Activated CD4-positive, alpha-beta T cell treated with anti-CD3 and anti-CD28 coated beads, Interleukin-2, amount 10 ng/mL, durations not matched to agents 24 days and 14 days (primary cell): ENCODE measurements at regions of chr2 and their contacts with region 1.

Region 1: DNA sequence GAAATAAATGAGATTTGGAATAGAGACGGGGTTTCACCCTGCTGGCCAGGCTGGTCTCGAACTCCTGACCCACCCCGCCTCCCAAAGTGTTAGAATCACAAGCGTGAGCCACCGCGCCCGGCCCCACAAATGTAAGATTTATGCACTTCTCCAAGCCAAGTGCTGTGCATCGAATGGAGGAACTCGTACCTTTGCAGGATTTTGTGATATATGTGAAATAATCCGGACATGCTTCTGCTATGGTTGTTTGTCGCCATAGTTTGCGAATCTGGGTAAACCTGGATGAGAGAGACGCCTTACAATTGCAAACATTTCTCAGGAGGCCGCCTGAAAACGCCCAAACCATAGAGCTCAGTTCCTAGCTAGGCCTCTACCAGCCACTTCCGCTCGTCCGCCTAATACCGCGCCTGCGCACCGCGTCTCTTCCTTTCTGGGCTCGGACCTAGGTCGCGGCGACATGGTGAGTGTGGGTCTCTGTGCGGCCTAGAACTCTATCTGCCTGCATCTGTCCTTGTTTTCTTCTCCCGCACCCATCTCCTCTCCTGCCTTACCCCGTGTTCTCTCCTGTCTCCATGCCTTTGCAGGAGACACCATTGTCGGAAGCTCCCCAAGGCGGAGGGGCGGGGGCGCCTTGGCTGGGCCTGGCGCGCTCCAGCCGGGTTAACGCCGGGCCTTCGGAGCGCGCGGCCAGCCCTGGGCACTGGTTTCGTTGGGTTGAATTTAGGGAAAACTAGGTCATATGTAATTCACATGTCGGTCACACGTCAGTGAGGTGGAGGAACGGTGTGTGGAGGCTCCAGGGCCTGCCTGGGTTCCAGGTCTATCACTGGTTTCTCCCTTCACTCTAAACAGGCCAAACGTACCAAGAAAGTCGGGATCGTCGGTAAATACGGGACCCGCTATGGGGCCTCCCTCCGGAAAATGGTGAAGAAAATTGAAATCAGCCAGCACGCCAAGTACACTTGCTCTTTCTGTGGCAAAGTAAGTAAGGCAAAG is at the start of gene RPL37A:
- DNase-seq: peak; percentile 97
- H3K4me3 Mint-ChIP-seq: peak within 1 kb of the TSS; percentile 100
- H3K27ac Mint-ChIP-seq: peak within 1 kb of the TSS; percentile 95
- H3K4me1 Mint-ChIP-seq: peaks cover 50% of the 10 kb centered on the region
- H3K27me3 Mint-ChIP-seq: no peaks in the 10 kb centered on the region
- total RNA-seq, gene RPL37A: 3,125 and 3,168 TPM in 2 replicates

Region 2: GRCh38 chr2:216206041-216206703 is 292.5 kb before region 1 on chr2:
- intact Hi-C with region 1: loop called (anchors 5 kb)
- DNase-seq: peak; percentile 50
- H3K4me3 Mint-ChIP-seq: peak overlapping the region; percentile 32
- H3K27ac Mint-ChIP-seq: peak overlapping the region; percentile 89
- H3K4me1 Mint-ChIP-seq: peaks cover 44% of the 10 kb centered on the region
- H3K27me3 Mint-ChIP-seq: no peaks in the 10 kb centered on the region

Region 3: GRCh38 chr2:216412022-216412999 is 86.4 kb before region 1 on chr2 and contains the start of gene SMARCAL1:
- intact Hi-C with region 1: loop called (anchors 1 kb)
- DNase-seq: peak; percentile 99
- H3K4me3 Mint-ChIP-seq: peak within 1 kb of the TSS; percentile 100
- H3K27ac Mint-ChIP-seq: peak within 1 kb of the TSS; percentile 96
- H3K4me1 Mint-ChIP-seq: peaks cover 16% of the 10 kb centered on the region
- H3K27me3 Mint-ChIP-seq: peaks cover 11% of the 10 kb centered on the region
- total RNA-seq, gene SMARCAL1: 27.4 and 29.0 TPM in 2 replicates

Region 4: DNA sequence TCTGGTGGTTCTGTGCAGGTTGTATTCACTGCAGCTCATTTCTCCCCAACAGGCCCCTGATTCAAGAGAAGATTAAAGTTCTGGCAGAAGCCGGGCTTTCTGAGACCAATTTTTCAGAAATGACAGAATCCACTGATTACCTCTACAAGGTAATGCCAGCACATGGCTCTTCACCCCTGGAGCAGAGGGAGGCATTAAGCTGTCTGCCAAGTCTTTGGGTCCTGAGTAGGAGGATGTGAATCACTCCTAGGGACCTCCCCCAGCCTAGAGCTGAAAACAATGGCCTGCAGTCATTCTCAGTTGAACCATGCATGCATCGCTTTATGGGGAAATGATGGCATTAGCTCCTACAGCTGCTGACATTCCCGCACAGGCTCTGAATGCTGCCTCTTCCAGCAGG is 20.6 kb before region 1 on chr2:
- intact Hi-C with region 1: loop called (anchors 1 kb)
- DNase-seq: no peak
- H3K4me3 Mint-ChIP-seq: no peak overlapping the region
- H3K27ac Mint-ChIP-seq: no peak overlapping the region
- H3K4me1 Mint-ChIP-seq: peaks cover 19% of the 10 kb centered on the region
- H3K27me3 Mint-ChIP-seq: no peaks in the 10 kb centered on the region

Region 5: GRCh38 chr2:216519154-216519762 is 20.5 kb after region 1 on chr2:
- intact Hi-C with region 1: no loop called
- DNase-seq: peak; percentile 89
- H3K4me3 Mint-ChIP-seq: no peak overlapping the region
- H3K27ac Mint-ChIP-seq: no peak overlapping the region
- H3K4me1 Mint-ChIP-seq: peaks cover 2% of the 10 kb centered on the region
- H3K27me3 Mint-ChIP-seq: no peaks in the 10 kb centered on the region

Region 6: DNA sequence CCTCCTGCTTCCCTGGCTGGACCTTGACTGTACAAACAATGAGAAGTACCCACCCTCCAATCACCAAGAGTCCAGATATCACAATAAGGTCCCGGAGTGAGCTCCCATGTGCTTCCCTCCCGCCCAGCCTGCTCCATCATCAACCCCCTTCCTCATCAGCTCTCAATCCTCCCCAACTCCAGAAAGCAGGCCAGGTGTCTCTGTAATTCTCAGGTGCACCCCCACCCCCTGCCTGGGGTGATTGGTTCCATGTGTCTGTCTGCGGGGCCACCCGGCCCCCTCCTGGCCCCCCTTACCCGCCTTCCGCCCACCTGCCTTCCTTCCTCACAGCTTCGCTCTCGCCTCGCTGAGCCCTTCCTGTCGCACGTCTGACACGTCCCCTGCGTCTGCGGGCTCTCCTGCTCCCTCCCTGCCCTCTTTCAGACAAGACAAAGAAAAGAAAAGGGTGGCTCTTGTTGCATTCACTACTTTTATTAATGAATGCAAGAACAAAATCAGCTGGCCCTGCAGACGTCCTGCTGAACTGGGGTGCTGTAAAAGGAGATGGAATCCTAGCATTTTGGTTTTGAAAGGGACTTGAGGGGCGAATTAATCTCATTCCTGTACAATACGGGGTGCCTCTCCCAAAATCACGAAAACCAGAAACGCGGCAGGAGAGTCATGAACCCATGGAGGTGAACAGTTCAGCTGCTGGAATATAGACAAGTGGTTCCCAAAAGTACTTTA is 108.0 kb after region 1 on chr2:
- intact Hi-C with region 1: loop called (anchors 2 kb)
- DNase-seq: peak; percentile 88
- H3K4me3 Mint-ChIP-seq: peak overlapping the region; percentile 92
- H3K27ac Mint-ChIP-seq: peak overlapping the region; percentile 98
- H3K4me1 Mint-ChIP-seq: peaks cover 40% of the 10 kb centered on the region
- H3K27me3 Mint-ChIP-seq: no peaks in the 10 kb centered on the region

Region 7: DNA sequence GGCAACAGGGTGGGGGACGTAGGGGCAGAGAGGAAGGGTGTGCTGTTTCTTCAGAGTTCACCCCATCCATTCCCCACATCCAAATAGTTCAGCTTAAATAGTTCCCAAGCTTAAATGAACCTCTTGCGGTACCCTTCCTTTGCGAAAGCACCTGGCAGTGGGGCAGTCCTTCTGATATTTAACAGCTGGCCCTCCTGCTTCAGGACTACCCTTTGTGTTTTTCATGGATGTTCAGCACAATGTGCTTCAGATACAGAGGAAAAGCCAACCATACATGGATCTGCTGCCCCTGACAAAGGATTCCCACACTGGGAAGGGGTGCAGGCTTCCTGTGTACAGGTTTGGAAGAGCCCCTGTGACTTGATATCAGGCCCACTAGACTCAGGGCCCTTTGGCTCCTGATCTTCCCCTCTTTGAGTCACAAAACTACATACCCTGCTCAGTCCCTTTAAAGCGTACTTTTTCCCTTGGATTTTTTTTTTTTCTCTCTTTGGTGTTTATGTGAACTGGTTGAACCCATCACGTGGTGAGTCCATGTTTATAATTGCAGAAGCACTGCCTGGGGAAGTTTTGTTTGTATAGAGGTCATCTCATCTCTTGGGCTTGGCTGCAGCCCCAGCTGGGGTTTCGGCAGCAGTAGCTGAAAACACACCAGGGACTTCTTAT is 242.0 kb after region 1 on chr2:
- intact Hi-C with region 1: no loop called
- DNase-seq: no peak
- H3K4me3 Mint-ChIP-seq: no peak overlapping the region
- H3K27ac Mint-ChIP-seq: no peak overlapping the region
- H3K4me1 Mint-ChIP-seq: no peaks in the 10 kb centered on the region
- H3K27me3 Mint-ChIP-seq: peaks cover 7% of the 10 kb centered on the region

Region 8: GRCh38 chr2:216765761-216766262 is 267.1 kb after region 1 on chr2:
- intact Hi-C with region 1: no loop called
- DNase-seq: no peak
- H3K4me3 Mint-ChIP-seq: no peak overlapping the region
- H3K27ac Mint-ChIP-seq: no peak overlapping the region
- H3K4me1 Mint-ChIP-seq: no peaks in the 10 kb centered on the region
- H3K27me3 Mint-ChIP-seq: peaks cover 34% of the 10 kb centered on the region